ENCODE measurements at regions of chr10 and their contacts with region 1.

Region 1: GRCh38 chr10:71909399-71910083 is 54.7 kb upstream of the CHST3 start:
- DNase-seq: no peak
- H3K4me3 ChIP-seq: no peak overlapping the region
- CTCF ChIP-seq: no peak
- POLR2A ChIP-seq: no peak

Region 2: GRCh38 chr10:71371750-71372166 is 537.8 kb before region 1 on chr10:
- intact Hi-C with region 1: no loop called
- DNase-seq: no peak
- H3K4me3 ChIP-seq: no peak overlapping the region
- CTCF ChIP-seq: no peak
- POLR2A ChIP-seq: no peak

Region 3: DNA sequence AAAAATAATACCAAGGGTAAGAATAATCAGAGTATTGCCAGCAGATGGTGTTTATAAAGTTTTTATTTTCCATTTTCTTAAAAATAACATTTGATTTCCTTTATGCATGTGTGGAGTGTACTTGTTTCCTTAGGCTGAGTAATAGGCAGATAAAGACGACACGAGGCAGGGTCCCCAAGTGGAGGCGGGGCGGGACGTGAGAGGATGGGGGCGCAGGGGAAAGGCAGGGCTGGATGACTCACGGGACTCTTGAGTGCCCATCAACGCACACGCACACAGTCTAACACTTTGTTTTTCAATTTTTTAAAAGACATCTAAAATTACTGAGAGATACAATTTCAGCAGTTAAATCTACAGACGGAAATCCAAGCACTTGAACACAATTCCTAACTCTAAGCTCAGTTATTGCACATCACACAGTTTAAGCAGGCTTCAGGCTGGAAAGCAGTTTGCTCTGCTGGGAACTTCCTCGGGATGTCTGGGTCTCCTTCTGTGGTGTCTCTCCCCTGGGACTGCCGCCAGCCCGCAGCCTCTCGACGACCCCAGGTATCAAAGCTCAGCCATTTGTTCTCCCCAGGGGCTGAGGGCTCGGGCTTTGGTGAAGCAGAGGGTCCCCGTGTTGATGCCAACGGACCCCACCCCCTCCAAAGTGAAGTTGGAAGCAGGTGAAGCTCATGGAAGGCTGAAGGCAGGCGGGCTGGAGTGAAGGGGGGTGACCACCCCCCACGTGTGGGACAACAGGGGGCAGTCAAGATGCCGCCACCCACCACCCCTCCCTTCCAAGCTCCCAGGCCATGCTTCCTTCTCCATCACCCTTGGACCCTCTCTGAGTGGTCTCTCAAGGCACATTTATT is 149.7 kb after region 1 on chr10:
- intact Hi-C with region 1: loop called (anchors 10 kb)
- DNase-seq: no peak
- H3K4me3 ChIP-seq: no peak overlapping the region
- CTCF ChIP-seq: no peak
- POLR2A ChIP-seq: no peak

Measured in lower leg skin (tissue), 4 donors.